ENCODE measurements at regions of chr4 and their contacts with region 1.

Region 1: GRCh38 chr4:1792832-1793495 is at the start of gene FGFR3:
- DNase-seq: peak; percentile 82
- H3K4me3 Mint-ChIP-seq: peak within 1 kb of the TSS; percentile 39
- H3K27ac Mint-ChIP-seq: no peak within 1 kb of the TSS
- H3K4me1 Mint-ChIP-seq: no peaks in the 10 kb centered on the region
- H3K27me3 Mint-ChIP-seq: peaks cover 24% of the 10 kb centered on the region
- total RNA-seq, gene FGFR3: 0.30 and 0.38 TPM in 2 replicates

Region 2: GRCh38 chr4:1579901-1580691 is 212.9 kb before region 1 on chr4:
- intact Hi-C with region 1: loop called (anchors 10 kb)
- DNase-seq: peak; percentile 93
- H3K4me3 Mint-ChIP-seq: peak overlapping the region; percentile 70
- H3K27ac Mint-ChIP-seq: no peak overlapping the region
- H3K4me1 Mint-ChIP-seq: peaks cover 3% of the 10 kb centered on the region
- H3K27me3 Mint-ChIP-seq: no peaks in the 10 kb centered on the region

Region 3: GRCh38 chr4:1752284-1753041 is 40.5 kb before region 1 on chr4:
- intact Hi-C with region 1: loop called (anchors 5 kb)
- DNase-seq: peak; percentile 86
- H3K4me3 Mint-ChIP-seq: peak overlapping the region; percentile 21
- H3K27ac Mint-ChIP-seq: peak overlapping the region; percentile 67
- H3K4me1 Mint-ChIP-seq: peaks cover 3% of the 10 kb centered on the region
- H3K27me3 Mint-ChIP-seq: no peaks in the 10 kb centered on the region

Region 4: DNA sequence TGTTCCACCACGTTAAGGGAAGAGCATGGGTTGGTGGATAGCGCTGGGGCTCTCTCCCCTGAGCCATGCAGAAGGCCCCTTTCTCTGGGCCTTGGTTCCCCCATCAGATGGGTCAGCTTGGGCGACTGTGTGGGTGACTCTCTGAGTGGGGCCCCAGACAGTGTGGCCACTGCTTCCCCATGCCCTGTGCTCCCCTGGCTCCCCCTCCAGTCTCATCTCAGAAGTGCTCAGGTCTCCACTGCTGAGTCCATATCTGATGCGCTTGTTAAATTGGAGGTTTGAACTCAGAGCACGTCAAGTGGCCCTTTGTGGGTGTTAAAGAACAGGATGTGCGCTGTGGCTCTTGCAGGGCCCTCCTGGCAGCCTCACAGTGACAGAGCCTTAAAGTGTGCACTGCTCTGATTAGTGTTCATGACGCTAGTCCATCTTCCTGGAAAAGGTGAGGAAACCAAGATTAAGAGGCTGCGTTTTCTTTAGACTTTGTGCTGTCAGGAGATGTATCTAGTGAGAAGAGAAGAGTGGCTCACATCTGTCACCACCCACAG is 156.0 kb after region 1 on chr4:
- intact Hi-C with region 1: no loop called
- DNase-seq: no peak
- H3K4me3 Mint-ChIP-seq: no peak overlapping the region
- H3K27ac Mint-ChIP-seq: no peak overlapping the region
- H3K4me1 Mint-ChIP-seq: no peaks in the 10 kb centered on the region
- H3K27me3 Mint-ChIP-seq: no peaks in the 10 kb centered on the region